IMR-90 (cell line): ENCODE measurements at regions of chr7 and their contacts with region 1.

Region 1: GRCh38 chr7:49367072-49367471 is 406.4 kb upstream of the VWC2 start:
- DNase-seq: no peak
- ATAC-seq: no peak
- H3K4me3 ChIP-seq: no peak overlapping the region
- H3K27ac ChIP-seq: no peak overlapping the region
- H3K4me1 ChIP-seq: no peaks in the 10 kb centered on the region
- H3K27me3 ChIP-seq: no peaks in the 10 kb centered on the region
- CTCF ChIP-seq: no peak
- POLR2A ChIP-seq: no peak
- RAD21 ChIP-seq: no peak

Region 2: DNA sequence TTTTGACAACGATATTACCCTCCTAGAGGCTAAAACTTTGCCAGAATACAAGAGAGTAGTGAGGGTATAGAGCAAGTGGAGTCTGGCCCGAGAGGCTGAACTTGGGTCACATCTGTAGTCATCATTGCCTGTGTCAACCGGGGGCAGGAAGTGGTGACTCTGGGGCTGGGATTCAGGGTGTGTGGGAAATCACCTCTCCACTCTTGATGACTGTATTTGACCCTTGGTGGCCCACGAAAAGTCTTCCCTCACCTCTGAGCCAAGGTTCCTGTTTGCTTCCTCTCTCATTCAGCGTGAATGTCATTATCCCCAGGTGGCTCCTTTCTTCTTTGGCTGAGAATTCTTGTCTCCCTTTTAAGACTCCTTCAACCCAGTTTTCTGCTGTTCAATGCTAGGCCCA is 955.5 kb before region 1 on chr7:
- CTCF ChIA-PET with region 1: no interaction called
- POLR2A ChIA-PET with region 1: interaction called, 15 read pairs
- dilution Hi-C with region 1: no loop called
- in situ Hi-C with region 1: no loop called
- intact Hi-C with region 1: no loop called
- DNase-seq: no peak
- ATAC-seq: no peak
- H3K4me3 ChIP-seq: no peak overlapping the region
- H3K27ac ChIP-seq: no peak overlapping the region
- H3K4me1 ChIP-seq: no peaks in the 10 kb centered on the region
- H3K27me3 ChIP-seq: no peaks in the 10 kb centered on the region
- CTCF ChIP-seq: no peak
- POLR2A ChIP-seq: no peak
- RAD21 ChIP-seq: no peak